ENCODE measurements at regions of chr22 and their contacts with region 1.

Region 1: DNA sequence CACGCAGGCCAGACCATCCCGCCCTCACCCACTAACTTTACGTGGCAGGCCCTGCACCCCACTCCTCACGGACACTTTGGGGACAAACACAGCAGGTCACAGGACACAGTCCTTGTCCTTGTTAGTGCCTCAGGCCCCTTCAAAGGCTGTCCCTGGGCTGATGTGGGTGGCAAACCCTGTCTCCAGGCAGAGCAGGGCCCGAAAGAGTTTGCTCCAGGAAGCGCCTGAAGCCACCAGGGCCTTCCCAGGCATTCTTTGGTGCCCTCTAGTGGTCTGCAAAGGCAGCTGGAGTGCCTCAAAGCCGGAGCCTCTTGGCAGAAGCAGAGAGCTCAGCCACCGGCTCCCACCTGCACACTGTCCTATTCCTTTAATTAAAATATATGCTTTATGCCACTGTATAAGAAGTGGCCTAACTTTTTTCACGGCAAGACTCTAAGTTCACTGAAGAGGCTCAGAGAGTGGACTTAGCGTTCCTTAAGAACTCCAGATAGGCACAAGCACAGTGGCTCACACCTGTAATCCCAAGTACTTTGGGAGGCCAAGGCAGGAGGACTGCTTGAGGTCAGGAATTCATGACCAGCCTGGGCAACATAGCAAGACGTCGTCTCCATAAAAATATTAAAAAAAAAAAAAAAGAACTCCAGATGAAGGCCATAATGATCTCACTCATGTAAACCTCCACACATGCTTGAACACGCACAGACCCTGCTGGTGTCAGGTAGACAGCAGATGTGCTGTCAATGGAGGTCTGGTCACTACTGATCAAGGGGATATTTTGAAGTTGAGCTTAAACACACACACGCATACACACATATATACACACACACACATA is 11.1 kb downstream of the TXN2 start:
- DNase-seq: peak; percentile 84
- ATAC-seq: peak; percentile 53
- H3K4me3 ChIP-seq: no peak overlapping the region
- H3K27ac ChIP-seq: no peak overlapping the region
- H3K4me1 ChIP-seq: peaks cover 58% of the 10 kb centered on the region
- H3K27me3 ChIP-seq: no peaks in the 10 kb centered on the region
- CTCF ChIP-seq: peak; percentile 82

Region 2: GRCh38 chr22:36301384-36301828 is 169.0 kb before region 1 on chr22:
- CTCF ChIA-PET with region 1: interaction called, 4 read pairs
- POLR2A ChIA-PET with region 1: interaction called, 3 read pairs
- intact Hi-C with region 1: loop called (anchors 1 kb)
- DNase-seq: peak; percentile 74
- ATAC-seq: peak; percentile 62
- H3K4me3 ChIP-seq: no peak overlapping the region
- H3K27ac ChIP-seq: peak overlapping the region; percentile 22; the same call in 1 of the 2 replicates
- H3K4me1 ChIP-seq: peaks cover 36% of the 10 kb centered on the region
- H3K27me3 ChIP-seq: no peaks in the 10 kb centered on the region
- CTCF ChIP-seq: peak; percentile 90

Region 3: GRCh38 chr22:36331306-36331911 is 139.0 kb before region 1 on chr22:
- CTCF ChIA-PET with region 1: no interaction called
- POLR2A ChIA-PET with region 1: no interaction called
- intact Hi-C with region 1: loop called (anchors 1 kb)
- DNase-seq: peak; percentile 96
- ATAC-seq: peak; percentile 58
- H3K4me3 ChIP-seq: peak overlapping the region; percentile 33; the same call in 1 of the 2 replicates
- H3K27ac ChIP-seq: peak overlapping the region; percentile 97
- H3K4me1 ChIP-seq: peaks cover 78% of the 10 kb centered on the region
- H3K27me3 ChIP-seq: no peaks in the 10 kb centered on the region
- CTCF ChIP-seq: no peak

Region 4: DNA sequence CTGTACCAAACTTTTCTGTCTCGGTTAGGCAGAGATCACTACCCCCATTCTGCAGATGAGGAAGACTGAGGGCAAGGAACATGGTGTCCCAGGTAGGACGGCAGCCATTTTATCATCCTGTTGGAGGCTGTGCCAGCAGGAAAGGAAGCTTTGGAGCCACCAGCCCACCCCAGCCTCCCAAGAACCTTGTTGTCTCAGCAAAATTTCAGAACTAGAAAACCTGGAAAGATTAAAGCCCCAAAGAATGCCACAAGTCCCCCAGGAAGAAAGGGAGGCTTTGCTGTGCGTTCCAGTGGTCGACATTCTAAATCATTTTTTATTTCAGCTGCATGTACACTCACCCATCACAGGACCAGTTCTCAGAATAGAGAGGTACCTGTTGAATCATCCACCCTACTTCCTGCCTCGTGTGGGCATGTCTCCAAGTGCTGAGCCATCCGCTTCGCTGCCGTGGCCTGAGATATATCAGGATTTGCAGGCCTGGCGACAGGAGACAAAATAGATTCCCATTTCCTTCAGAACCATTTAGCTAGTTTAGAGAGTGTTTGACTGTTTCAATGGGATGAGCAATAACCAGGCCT is 71.5 kb after region 1 on chr22:
- CTCF ChIA-PET with region 1: no interaction called
- POLR2A ChIA-PET with region 1: no interaction called
- intact Hi-C with region 1: no loop called
- DNase-seq: peak; percentile 94
- ATAC-seq: peak; percentile 73
- H3K4me3 ChIP-seq: peak overlapping the region; percentile 22; the same call in 1 of the 2 replicates
- H3K27ac ChIP-seq: peak overlapping the region; percentile 92
- H3K4me1 ChIP-seq: peaks cover 34% of the 10 kb centered on the region
- H3K27me3 ChIP-seq: no peaks in the 10 kb centered on the region
- CTCF ChIP-seq: no peak

Region 5: DNA sequence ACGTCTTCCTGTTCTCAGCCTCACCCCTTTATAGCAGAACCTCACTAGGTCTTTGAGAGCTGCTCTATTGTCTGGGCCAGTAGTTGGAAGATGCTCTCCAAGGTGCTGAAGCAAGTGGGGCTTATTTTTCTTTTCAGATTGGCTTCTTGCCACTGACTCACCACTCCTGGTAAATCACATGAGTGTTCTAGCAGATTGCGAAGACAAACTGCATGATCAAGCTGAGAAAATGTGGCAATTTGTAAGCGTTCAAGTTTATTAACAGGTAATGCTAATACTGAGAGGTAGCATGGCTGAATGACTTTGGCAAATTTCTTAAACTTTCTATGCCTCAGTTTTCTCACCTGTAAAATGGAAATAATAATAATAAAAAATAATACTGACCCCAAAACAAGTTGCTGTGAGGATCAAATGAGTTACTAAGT is 174.0 kb after region 1 on chr22:
- CTCF ChIA-PET with region 1: no interaction called
- POLR2A ChIA-PET with region 1: no interaction called
- intact Hi-C with region 1: no loop called
- DNase-seq: peak; percentile 94
- ATAC-seq: no peak
- H3K4me3 ChIP-seq: no peak overlapping the region
- H3K27ac ChIP-seq: no peak overlapping the region
- H3K4me1 ChIP-seq: peaks cover 14% of the 10 kb centered on the region; the same call in 1 of the 2 replicates
- H3K27me3 ChIP-seq: peaks cover 28% of the 10 kb centered on the region
- CTCF ChIP-seq: no peak